ENCODE measurements at regions of chr9 and their contacts with region 1.

Region 1: GRCh38 chr9:130213903-130214761 is 41.9 kb downstream of the NCS1 start:
- DNase-seq: no peak
- H3K4me3 ChIP-seq: no peak overlapping the region
- H3K27ac ChIP-seq: peak overlapping the region; percentile 13 to 73 (median 62)
- H3K4me1 ChIP-seq: peaks cover 0 to 17% (median 5%) of the 10 kb centered on the region in 4 donors
- H3K27me3 ChIP-seq: no peaks in the 10 kb centered on the region
- CTCF ChIP-seq: no peak
- EP300 ChIP-seq: no peak
- POLR2A ChIP-seq: no peak

Region 2: GRCh38 chr9:128902351-128903078 is 1311.6 kb before region 1 on chr9:
- in situ Hi-C with region 1: no loop called
- intact Hi-C with region 1: no loop called
- DNase-seq: peak; percentile 86
- H3K4me3 ChIP-seq: no peak overlapping the region
- H3K27ac ChIP-seq: peak overlapping the region; percentile 65 to 83 (median 73)
- H3K4me1 ChIP-seq: peaks cover 21 to 41% (median 22%) of the 10 kb centered on the region in 4 donors
- H3K27me3 ChIP-seq: no peaks in the 10 kb centered on the region
- CTCF ChIP-seq: no peak
- EP300 ChIP-seq: no peak
- POLR2A ChIP-seq: peak; percentile 78

Region 3: GRCh38 chr9:131382850-131383729 is 1169.0 kb after region 1 on chr9:
- in situ Hi-C with region 1: no loop called
- intact Hi-C with region 1: loop called (anchors 5 kb)
- DNase-seq: no peak
- H3K4me3 ChIP-seq: no peak overlapping the region
- H3K27ac ChIP-seq: peak overlapping the region; percentile 45 to 65 (median 50)
- H3K4me1 ChIP-seq: peaks cover 0 to 11% (median 8%) of the 10 kb centered on the region in 4 donors
- H3K27me3 ChIP-seq: no peaks in the 10 kb centered on the region
- CTCF ChIP-seq: no peak
- EP300 ChIP-seq: no peak
- POLR2A ChIP-seq: no peak